ENCODE measurements at regions of chr4 and their contacts with region 1.

Region 1: DNA sequence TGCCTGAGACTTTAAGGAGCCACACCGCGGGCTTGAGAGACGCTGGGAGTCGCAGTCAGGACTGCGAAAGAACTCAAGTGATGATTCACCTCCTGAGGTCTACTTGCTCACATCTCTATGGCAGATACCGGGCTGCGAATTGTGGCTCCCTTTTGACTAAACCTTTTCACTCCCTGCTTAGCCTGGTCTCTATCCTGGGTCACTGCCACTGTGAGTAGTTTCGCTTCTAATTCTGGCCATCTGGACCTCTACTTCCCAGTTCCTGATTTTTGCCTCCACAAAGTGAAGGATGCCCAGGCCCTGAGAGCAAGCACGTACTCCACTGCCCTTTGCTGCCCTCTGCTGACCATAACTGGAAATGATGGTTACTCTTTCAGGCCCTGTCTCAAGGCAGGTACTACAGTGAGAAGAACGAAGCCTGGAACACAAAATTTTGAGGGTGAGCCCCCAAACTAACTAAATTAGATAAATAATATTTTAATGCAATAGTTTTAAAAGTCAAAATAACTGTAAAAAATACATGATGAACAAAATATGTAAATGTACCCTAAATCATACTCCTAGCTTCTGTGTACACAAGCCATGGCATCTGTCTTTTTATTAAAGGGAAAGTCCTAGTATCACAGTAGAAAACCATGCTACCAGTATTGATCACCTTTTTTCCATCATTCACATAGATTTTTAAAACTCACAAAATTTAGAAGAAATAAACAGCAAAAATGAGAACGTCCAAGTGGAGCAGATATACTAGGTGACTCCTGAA is 16.7 kb downstream of the MAD2L1 start:
- DNase-seq: peak; percentile 46 to 80 (median 73)
- ATAC-seq: peak; percentile 98
- H3K4me3 ChIP-seq: no peak overlapping the region
- H3K4me3 Mint-ChIP-seq: peak overlapping the region; percentile 54
- H3K27ac ChIP-seq: no peak overlapping the region
- H3K27ac Mint-ChIP-seq: no peak overlapping the region
- H3K4me1 ChIP-seq: no peaks in the 10 kb centered on the region
- H3K4me1 Mint-ChIP-seq: peaks cover 2% of the 10 kb centered on the region
- H3K27me3 ChIP-seq: no peaks in the 10 kb centered on the region
- H3K27me3 Mint-ChIP-seq: no peaks in the 10 kb centered on the region
- CTCF ChIP-seq: peak; percentile 90

Region 2: DNA sequence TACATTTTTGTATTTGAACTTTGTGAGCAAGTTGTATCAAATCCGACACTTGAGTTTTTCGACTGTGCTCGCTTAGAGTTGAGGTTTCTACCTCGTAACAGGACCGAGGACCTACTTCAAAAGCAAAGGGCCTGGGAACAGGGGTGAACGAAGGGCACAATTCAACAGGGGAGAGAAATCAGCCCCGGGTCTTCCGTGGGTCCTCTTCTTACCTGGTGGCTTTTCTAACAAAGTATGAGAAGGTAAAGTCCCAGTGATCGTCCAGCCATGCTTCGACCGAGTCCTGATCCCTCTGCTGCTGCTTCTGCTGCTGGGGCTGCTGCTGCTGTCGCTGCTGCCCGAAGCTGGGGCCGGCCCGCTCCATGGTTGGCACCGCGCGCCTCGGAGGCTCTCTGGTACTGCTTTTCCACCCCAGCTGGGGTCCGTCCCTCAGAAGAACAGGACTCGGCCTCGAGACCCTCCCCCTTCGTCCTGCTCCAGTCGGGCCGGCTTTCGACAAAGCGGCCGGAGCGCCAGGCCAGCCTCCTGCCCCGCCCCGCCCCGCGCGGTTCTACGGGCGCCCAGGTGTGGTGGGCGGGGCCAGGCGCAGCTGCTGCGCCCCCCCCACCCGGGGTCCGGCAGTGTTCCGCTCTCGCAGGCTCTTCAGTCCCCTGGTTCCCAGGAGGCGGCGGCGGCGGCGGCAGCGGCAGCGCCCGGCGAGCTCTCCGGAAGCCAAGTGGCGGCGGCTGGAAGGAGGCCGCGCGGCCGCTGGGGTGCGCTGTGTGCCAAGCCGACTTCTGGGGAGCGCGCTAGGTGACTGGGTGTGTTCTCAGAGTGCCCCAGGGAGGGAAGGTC is 421.4 kb before region 1 on chr4 and contains the start of gene PDE5A:
- CTCF ChIA-PET with region 1: interaction called, 8 read pairs
- POLR2A ChIA-PET with region 1: no interaction called
- intact Hi-C with region 1: loop called (anchors 1 kb)
- DNase-seq: peak; percentile 52 to 85 (median 76)
- ATAC-seq: peak; percentile 76
- H3K4me3 ChIP-seq: peak within 1 kb of the TSS; percentile 73 to 78
- H3K4me3 Mint-ChIP-seq: peak within 1 kb of the TSS; percentile 88
- H3K27ac ChIP-seq: peak within 1 kb of the TSS in 1 of 2 experiments; percentile 50
- H3K27ac Mint-ChIP-seq: peak within 1 kb of the TSS; percentile 71
- H3K4me1 ChIP-seq: peaks cover 9% of the 10 kb centered on the region
- H3K4me1 Mint-ChIP-seq: peaks cover 23% of the 10 kb centered on the region
- H3K27me3 ChIP-seq: no peaks in the 10 kb centered on the region
- H3K27me3 Mint-ChIP-seq: peaks cover 7% of the 10 kb centered on the region
- CTCF ChIP-seq: peak; percentile 74
- total RNA-seq, gene PDE5A: 0.11 to 0.25 TPM

Region 3: DNA sequence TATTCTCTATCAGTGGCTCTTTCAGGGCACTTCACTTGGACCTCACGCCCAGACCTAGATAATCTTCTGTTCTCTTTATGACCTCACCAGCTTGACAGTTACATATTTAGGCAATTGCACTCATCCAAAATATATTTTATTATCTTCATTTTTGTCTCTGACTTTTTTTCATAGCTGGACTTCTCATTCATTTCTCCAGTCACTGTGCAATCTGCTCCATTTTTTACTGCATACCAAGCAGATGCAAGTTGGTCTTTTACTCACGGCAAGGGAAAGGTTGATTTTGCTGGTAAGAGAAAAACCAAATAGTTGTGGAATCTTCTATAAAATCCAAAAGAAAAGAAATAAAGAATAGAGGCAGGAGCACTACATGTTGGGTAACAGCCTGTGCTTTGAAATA is 15.0 kb before region 1 on chr4:
- CTCF ChIA-PET with region 1: no interaction called
- POLR2A ChIA-PET with region 1: no interaction called
- intact Hi-C with region 1: no loop called
- DNase-seq: no peak
- ATAC-seq: no peak
- H3K4me3 ChIP-seq: no peak overlapping the region
- H3K4me3 Mint-ChIP-seq: no peak overlapping the region
- H3K27ac ChIP-seq: no peak overlapping the region
- H3K27ac Mint-ChIP-seq: no peak overlapping the region
- H3K4me1 ChIP-seq: no peaks in the 10 kb centered on the region
- H3K4me1 Mint-ChIP-seq: no peaks in the 10 kb centered on the region
- H3K27me3 ChIP-seq: no peaks in the 10 kb centered on the region
- H3K27me3 Mint-ChIP-seq: peaks cover 25% of the 10 kb centered on the region
- CTCF ChIP-seq: no peak

Measured in CD8-positive, alpha-beta T cell (primary cell).